MCF 10A (cell line): ENCODE measurements at regions of chr9 and their contacts with region 1.

Region 1: GRCh38 chr9:121686930-121687541 is 35.6 kb downstream of the DAB2IP start:
- DNase-seq: peak; percentile 70
- H3K4me3 Mint-ChIP-seq: no peak overlapping the region
- H3K27ac Mint-ChIP-seq: no peak overlapping the region
- H3K4me1 Mint-ChIP-seq: peaks cover 2% of the 10 kb centered on the region
- H3K27me3 Mint-ChIP-seq: no peaks in the 10 kb centered on the region
- CTCF ChIP-seq: peak; percentile 92

Region 2: GRCh38 chr9:121538246-121538645 is 148.8 kb before region 1 on chr9:
- CTCF ChIA-PET with region 1: interaction called, 16 read pairs
- POLR2A ChIA-PET with region 1: no interaction called
- intact Hi-C with region 1: no loop called
- DNase-seq: peak; percentile 41
- H3K4me3 Mint-ChIP-seq: no peak overlapping the region
- H3K27ac Mint-ChIP-seq: no peak overlapping the region
- H3K4me1 Mint-ChIP-seq: no peaks in the 10 kb centered on the region
- H3K27me3 Mint-ChIP-seq: peaks cover 5% of the 10 kb centered on the region
- CTCF ChIP-seq: peak; percentile 11

Region 3: DNA sequence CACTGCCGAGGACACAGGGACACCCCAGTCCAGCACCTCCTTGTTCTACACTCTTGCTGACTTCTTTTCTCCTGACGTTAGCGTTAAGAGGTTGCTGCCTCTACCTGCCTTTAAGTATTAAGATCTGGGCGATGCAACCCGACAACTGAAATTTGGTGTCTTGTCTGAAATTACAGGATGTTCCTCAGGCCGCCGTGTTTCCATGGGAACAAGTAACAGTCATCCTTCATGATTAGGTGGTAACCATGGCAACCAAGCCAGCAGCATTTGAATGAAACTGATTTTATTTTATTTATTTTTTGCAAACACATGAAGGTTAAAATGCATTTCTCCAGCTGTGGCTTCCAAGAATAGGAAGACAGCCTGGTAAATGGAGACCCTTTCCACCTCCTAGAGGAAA is 14.8 kb before region 1 on chr9:
- CTCF ChIA-PET with region 1: interaction called, 10 read pairs
- POLR2A ChIA-PET with region 1: no interaction called
- intact Hi-C with region 1: no loop called
- DNase-seq: no peak
- H3K4me3 Mint-ChIP-seq: no peak overlapping the region
- H3K27ac Mint-ChIP-seq: no peak overlapping the region
- H3K4me1 Mint-ChIP-seq: peaks cover 6% of the 10 kb centered on the region
- H3K27me3 Mint-ChIP-seq: no peaks in the 10 kb centered on the region
- CTCF ChIP-seq: no peak

Region 4: DNA sequence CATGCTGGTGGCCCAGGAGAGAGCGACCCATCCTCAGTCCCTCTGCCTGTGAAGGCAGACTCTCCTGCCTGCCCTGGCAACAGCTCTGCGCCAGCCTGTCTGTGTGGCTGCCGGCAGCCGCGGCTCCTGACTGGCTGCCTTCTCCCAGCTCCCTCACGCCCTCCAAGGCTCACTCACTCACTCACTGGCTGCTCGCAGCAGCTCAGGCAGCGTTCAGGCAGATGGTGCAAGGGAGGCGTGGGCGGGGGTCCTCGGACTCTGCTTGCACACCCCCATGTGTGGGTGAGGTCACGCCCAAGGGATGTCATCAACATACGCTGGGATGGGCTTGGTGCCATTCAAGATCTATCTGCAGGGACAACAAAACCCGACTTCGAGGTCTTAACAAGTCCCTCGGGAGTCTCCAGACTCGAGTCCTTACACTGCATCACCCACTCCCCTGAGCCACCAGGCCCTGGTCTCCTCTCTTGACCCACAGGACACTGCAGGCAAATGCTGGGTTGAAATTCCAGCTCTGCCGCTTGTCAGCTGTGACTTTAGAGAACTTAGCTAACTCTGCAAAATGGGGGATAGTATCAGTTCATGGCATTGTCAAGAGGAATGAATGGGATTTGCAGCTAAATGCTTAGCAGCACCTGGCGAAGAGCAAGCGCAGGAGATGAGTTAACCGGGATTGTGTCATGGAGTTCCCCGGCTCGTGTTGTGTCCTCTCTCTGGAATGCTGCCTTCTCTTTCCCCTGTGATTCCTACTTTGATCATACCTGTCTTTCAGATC is 31.2 kb after region 1 on chr9:
- CTCF ChIA-PET with region 1: interaction called, 11 read pairs
- POLR2A ChIA-PET with region 1: interaction called, 3 read pairs
- intact Hi-C with region 1: no loop called
- DNase-seq: no peak
- H3K4me3 Mint-ChIP-seq: no peak overlapping the region
- H3K27ac Mint-ChIP-seq: peak overlapping the region; percentile 63
- H3K4me1 Mint-ChIP-seq: peaks cover 35% of the 10 kb centered on the region
- H3K27me3 Mint-ChIP-seq: no peaks in the 10 kb centered on the region
- CTCF ChIP-seq: no peak

Region 5: DNA sequence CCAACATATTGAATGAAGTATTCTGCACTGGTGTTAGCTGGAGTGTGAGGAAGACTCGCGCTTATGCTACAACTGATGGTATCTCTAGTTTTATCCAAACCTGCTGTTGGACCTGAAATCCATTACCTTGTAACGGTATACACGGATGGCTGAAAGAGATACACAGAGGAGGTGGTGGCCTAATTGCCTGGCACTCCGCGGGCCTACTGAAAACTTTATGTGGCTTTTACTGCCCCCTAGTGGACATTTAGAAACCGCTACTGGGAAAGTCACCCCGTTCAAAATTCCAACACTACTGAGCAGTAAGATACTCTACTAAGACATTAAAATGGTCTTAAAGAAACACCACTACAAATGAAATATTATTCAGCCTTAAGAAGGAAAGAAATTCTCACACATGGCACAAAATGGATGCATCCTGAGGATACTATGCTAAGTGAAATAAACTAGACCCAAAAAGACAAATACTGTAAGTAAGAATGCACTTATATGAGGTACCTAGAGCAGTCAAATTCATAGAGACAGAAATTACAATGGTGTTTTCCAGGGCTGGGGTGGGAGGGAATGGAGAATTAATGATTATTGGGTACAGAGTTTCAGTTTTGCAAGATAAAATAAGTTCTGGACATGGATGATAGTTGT is 305.7 kb after region 1 on chr9:
- CTCF ChIA-PET with region 1: interaction called, 29 read pairs
- POLR2A ChIA-PET with region 1: no interaction called
- intact Hi-C with region 1: loop called (anchors 1 kb)
- DNase-seq: peak; percentile 83
- H3K4me3 Mint-ChIP-seq: no peak overlapping the region
- H3K27ac Mint-ChIP-seq: no peak overlapping the region
- H3K4me1 Mint-ChIP-seq: peaks cover 5% of the 10 kb centered on the region
- H3K27me3 Mint-ChIP-seq: no peaks in the 10 kb centered on the region
- CTCF ChIP-seq: peak; percentile 56

Region 6: GRCh38 chr9:122099271-122099869 is 412.3 kb after region 1 on chr9:
- CTCF ChIA-PET with region 1: interaction called, 9 read pairs
- POLR2A ChIA-PET with region 1: no interaction called
- intact Hi-C with region 1: loop called (anchors 5 kb)
- DNase-seq: peak; percentile 79
- H3K4me3 Mint-ChIP-seq: no peak overlapping the region
- H3K27ac Mint-ChIP-seq: no peak overlapping the region
- H3K4me1 Mint-ChIP-seq: peaks cover 6% of the 10 kb centered on the region
- H3K27me3 Mint-ChIP-seq: no peaks in the 10 kb centered on the region
- CTCF ChIP-seq: peak; percentile 84